Caco-2 (cell line): ENCODE measurements at regions of chr11 and their contacts with region 1.

Region 1: GRCh38 chr11:8566613-8567210 is 27.3 kb downstream of the STK33 start:
- DNase-seq: peak in 1 of 2 experiments; percentile 29
- H3K4me3 ChIP-seq: no peak overlapping the region
- H3K4me3 Mint-ChIP-seq: no peak overlapping the region
- H3K27ac Mint-ChIP-seq: no peak overlapping the region
- H3K4me1 ChIP-seq: no peaks in the 10 kb centered on the region
- H3K4me1 Mint-ChIP-seq: no peaks in the 10 kb centered on the region
- H3K27me3 ChIP-seq: no peaks in the 10 kb centered on the region; the same call in 1 of the 2 replicates
- H3K27me3 Mint-ChIP-seq: peaks cover 7% of the 10 kb centered on the region
- CTCF ChIP-seq: peak; percentile 39 to 65

Region 2: GRCh38 chr11:8192016-8192895 is 374.5 kb before region 1 on chr11:
- CTCF ChIA-PET with region 1: interaction called, 3 read pairs
- POLR2A ChIA-PET with region 1: no interaction called
- intact Hi-C with region 1: loop called (anchors 1 kb)
- DNase-seq: peak; percentile 71 to 76
- H3K4me3 ChIP-seq: no peak overlapping the region
- H3K4me3 Mint-ChIP-seq: no peak overlapping the region
- H3K27ac Mint-ChIP-seq: no peak overlapping the region
- H3K4me1 ChIP-seq: no peaks in the 10 kb centered on the region
- H3K4me1 Mint-ChIP-seq: no peaks in the 10 kb centered on the region
- H3K27me3 ChIP-seq: no peaks in the 10 kb centered on the region; the same call in 1 of the 2 replicates
- H3K27me3 Mint-ChIP-seq: peaks cover 5% of the 10 kb centered on the region
- CTCF ChIP-seq: peak; percentile 84 to 93

Region 3: DNA sequence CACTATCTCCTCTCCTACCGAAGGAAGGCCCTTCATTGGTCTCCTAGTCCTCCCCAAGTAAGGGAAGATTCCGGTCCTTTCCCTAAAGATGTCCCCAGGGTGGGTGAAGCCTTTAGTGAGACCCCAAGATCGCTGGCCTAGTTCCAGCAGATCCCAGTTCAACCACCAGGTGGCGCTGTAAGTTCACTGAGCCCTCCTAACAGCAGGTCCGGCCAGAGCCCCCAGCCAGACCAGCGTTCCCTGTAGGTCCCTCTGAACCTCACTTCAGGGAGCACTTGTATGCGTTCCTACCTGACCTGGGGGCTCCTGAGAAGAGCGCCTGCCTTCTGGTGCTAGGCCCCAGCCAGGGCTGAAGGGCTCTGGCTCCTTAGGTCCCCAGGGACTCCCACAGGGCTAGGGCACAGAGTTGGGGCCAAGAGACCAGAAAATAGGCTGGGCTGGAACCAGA is 341.1 kb before region 1 on chr11:
- CTCF ChIA-PET with region 1: interaction called, 9 read pairs
- POLR2A ChIA-PET with region 1: no interaction called
- intact Hi-C with region 1: loop called (anchors 1 kb)
- DNase-seq: peak; percentile 69 to 74
- H3K4me3 ChIP-seq: no peak overlapping the region
- H3K4me3 Mint-ChIP-seq: no peak overlapping the region
- H3K27ac Mint-ChIP-seq: no peak overlapping the region
- H3K4me1 ChIP-seq: no peaks in the 10 kb centered on the region
- H3K4me1 Mint-ChIP-seq: no peaks in the 10 kb centered on the region
- H3K27me3 ChIP-seq: no peaks in the 10 kb centered on the region
- H3K27me3 Mint-ChIP-seq: peaks cover 8% of the 10 kb centered on the region
- CTCF ChIP-seq: peak; percentile 91 to 92

Region 4: DNA sequence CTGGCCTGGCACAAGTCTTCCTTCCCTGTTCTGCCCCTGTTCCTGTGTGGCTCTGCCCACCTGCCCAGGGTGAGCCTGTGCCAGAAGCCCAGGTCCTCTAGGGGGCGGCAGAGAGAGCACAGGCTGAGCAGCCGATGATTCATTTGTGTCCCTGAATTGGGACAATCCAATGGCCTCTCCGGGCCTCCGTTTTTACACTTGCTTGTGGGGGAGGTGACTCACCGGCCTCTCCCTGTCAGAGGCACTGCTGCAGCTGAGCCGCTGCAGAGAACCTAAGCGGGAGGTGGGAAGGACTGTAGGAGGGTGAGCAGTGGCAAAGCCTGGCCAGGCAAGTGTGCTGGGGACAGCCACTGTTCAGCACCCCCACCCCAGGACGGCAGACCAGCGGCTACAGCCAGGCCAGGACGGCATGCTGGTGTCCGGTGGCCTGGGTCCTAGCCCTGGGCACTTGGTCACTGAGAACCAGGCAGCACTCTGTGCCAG is 237.8 kb before region 1 on chr11:
- CTCF ChIA-PET with region 1: interaction called, 3 read pairs
- POLR2A ChIA-PET with region 1: no interaction called
- intact Hi-C with region 1: loop called (anchors 2 kb)
- DNase-seq: peak; percentile 83 to 87
- H3K4me3 ChIP-seq: no peak overlapping the region
- H3K4me3 Mint-ChIP-seq: peak overlapping the region; percentile 45
- H3K27ac Mint-ChIP-seq: no peak overlapping the region
- H3K4me1 ChIP-seq: no peaks in the 10 kb centered on the region
- H3K4me1 Mint-ChIP-seq: no peaks in the 10 kb centered on the region
- H3K27me3 ChIP-seq: no peaks in the 10 kb centered on the region
- H3K27me3 Mint-ChIP-seq: peaks cover 3% of the 10 kb centered on the region
- CTCF ChIP-seq: peak; percentile 73 to 87

Region 5: GRCh38 chr11:8384199-8384821 is 182.4 kb before region 1 on chr11:
- CTCF ChIA-PET with region 1: no interaction called
- POLR2A ChIA-PET with region 1: no interaction called
- intact Hi-C with region 1: loop called (anchors 1 kb)
- DNase-seq: peak in 1 of 2 experiments; percentile 25
- H3K4me3 ChIP-seq: no peak overlapping the region
- H3K4me3 Mint-ChIP-seq: peak overlapping the region; percentile 12
- H3K27ac Mint-ChIP-seq: no peak overlapping the region
- H3K4me1 ChIP-seq: peaks cover 4% of the 10 kb centered on the region
- H3K4me1 Mint-ChIP-seq: peaks cover 10% of the 10 kb centered on the region
- H3K27me3 ChIP-seq: no peaks in the 10 kb centered on the region
- H3K27me3 Mint-ChIP-seq: peaks cover 2% of the 10 kb centered on the region
- CTCF ChIP-seq: no peak

Region 6: DNA sequence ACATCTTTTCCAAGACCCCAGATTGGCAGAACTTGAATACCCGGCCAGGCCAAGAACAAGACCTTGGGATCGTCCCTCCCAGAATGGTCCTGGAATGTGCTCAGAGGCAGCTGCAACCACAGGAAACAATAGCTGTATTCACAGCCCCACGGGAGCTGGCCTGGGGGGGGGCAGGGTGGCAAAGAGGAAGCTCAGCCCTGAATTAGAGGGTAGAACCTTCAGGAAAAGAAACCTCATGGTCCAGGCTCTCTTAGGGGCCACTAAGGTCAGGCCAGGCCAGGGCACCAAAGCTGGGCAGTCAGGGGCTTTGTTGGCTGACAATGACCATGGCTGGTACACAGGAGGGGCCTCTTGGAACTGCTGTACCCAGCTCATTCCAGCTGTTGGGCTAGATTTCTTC is 133.2 kb after region 1 on chr11:
- CTCF ChIA-PET with region 1: no interaction called
- POLR2A ChIA-PET with region 1: no interaction called
- intact Hi-C with region 1: no loop called
- DNase-seq: no peak
- H3K4me3 ChIP-seq: no peak overlapping the region
- H3K4me3 Mint-ChIP-seq: no peak overlapping the region
- H3K27ac Mint-ChIP-seq: peak overlapping the region; percentile 69
- H3K4me1 ChIP-seq: peaks cover 21% of the 10 kb centered on the region
- H3K4me1 Mint-ChIP-seq: peaks cover 22% of the 10 kb centered on the region
- H3K27me3 ChIP-seq: no peaks in the 10 kb centered on the region
- H3K27me3 Mint-ChIP-seq: no peaks in the 10 kb centered on the region
- CTCF ChIP-seq: no peak